ENCODE measurements at regions of chr2 and their contacts with region 1.

Region 1: DNA sequence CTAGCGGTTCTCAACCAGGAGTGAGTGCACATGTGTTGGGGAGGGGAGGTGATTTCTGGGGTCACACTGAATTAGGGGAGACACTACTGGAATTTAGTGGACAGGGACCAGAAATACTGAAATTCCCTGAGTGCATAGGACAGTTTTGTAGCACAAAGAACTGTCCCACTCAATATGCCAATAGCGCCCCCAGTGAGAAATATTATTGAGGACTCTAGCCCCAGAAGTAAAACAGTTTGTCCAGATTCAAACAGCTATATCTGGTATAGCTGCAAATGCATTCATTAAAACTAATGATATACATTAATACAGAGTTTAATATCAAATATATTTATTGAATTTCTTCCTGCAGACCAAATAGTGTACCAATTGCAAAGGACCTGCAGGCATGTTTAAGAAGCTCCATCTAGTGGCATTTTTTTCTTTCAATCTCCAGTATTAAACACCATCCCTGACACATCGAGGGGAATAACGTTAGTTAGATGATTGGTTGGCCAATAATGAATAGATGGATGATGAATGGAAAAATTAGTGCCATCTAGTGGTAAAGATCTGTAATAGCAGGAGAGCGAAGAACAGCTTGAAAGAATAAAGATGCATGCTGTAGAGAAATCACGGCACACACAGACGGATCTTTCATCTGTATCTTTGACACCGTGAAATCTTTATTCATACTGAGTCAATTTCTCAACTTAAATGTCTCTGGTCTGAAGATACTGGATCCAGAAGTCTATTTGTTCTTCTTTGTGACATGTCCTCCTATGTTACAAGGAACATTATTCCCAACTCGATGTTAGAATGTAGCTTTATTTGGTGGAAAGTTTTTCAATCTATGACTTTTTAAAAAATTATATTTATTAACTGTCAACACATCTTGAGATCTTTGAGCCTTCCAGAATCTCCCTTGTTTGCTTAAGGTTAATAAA is 62.5 kb downstream of the DHRS9 start:
- DNase-seq: no peak
- H3K4me3 ChIP-seq: no peak overlapping the region
- H3K27ac ChIP-seq: no peak overlapping the region
- H3K4me1 ChIP-seq: no peaks in the 10 kb centered on the region
- H3K27me3 ChIP-seq: no peaks in the 10 kb centered on the region
- CTCF ChIP-seq: peak; percentile 64 to 78 (median 74)
- POLR2A ChIP-seq: no peak

Region 2: DNA sequence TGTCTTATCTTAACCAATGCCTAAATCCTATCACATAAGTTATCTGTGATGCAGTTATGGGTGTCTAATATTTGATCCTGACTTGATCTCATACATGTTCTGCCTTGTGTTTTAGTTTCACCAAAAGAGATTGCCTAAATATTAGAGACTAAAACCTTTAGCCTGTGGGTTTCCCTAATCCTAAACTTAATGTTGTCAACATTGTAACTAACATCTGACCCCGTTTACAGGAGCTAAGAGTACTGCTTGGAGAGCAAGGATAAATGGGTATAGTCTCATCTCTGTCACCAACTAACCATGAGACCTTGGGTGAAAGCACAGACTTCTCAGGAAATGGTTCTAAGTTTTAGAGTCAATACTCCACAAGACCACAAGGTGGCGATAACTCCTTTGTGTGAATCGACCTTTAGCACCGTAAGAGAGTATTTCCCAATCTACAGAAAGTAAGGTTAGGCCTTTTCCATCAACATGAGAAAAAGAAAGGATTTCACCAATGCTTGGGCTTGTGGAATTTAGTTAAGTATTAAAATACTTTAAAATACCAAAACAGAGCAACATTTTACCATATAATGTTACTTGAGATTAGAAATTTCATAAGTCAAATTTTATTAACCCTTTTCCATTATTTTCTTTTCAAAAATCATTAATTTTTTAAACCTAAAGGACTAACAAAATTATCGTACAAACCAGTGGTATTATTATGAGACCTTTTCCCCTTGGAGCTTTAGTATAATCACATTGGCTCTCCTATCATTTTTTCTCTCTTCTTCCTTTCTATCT is 170.2 kb before region 1 on chr2:
- intact Hi-C with region 1: loop called (anchors 5 kb)
- DNase-seq: peak; percentile 61
- H3K4me3 ChIP-seq: no peak overlapping the region
- H3K27ac ChIP-seq: no peak overlapping the region
- H3K4me1 ChIP-seq: no peaks in the 10 kb centered on the region
- H3K27me3 ChIP-seq: no peaks in the 10 kb centered on the region
- CTCF ChIP-seq: peak; percentile 14 to 87 (median 86)
- POLR2A ChIP-seq: no peak

Region 3: DNA sequence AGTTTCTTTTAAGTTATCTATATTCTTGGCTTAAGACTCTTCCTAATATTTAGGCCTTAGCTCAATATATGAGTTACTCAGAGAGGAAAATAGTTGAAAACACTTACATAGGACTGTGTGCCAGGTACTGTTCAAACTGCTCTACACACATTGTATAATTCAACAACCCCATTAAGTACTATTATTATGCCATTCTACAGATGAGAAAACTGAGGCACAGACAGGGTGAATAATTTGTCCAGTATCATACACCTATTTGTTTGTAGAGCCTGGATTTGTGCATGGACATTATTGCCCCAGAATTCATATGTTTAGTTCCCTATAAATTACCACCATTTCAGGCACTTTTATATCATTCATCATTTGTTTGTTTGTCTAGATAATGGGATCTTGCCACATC is 1667.1 kb after region 1 on chr2:
- intact Hi-C with region 1: no loop called
- DNase-seq: no peak
- H3K4me3 ChIP-seq: no peak overlapping the region
- H3K27ac ChIP-seq: no peak overlapping the region
- H3K4me1 ChIP-seq: no peaks in the 10 kb centered on the region
- H3K27me3 ChIP-seq: no peaks in the 10 kb centered on the region
- CTCF ChIP-seq: no peak
- POLR2A ChIP-seq: no peak

Measured in prostate gland (tissue), 2 donors.